ENCODE measurements at regions of chr17 and their contacts with region 1.

Region 1: DNA sequence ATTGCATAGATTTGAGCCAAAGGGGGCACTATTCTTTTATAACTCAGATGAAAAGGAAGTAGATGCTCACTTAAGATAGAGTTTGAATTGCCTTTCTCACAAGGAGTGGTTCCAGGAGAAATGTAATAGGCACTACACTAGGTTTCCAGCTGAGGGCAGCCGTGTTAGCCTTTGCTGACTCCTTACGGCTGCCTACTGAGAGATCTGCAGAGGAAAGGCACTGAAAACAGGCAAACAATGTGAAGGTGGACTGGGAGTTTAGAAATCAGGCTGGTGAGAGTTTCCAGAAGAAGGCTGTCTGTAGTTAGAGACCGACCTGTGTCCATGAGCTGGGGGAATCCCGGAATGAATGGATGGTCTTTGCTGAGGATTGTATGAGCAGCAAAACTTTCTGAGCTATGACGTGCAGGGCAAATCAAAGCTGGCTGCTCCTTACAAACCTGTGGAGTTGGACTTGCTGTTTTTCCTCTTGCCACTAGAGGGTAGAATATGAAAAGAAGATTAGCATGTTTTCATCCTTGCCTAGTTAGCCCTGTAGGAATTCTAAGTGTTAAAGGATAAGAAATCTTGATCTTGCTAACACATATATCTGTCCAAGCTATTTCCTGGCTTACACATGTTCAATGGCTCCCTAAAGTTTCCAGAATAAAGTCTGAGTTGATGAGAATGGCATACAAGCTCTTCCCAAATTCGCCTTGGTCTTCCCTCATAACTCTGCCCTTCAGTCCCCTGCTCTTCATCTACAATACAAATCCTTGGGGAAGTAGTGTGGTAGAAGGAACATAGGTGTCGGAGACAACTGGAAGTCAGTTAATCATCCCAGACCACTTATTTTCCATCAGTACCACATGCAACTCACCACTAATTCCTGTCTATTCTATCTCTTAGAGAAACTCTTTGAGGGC is 20.1 kb upstream of the TAOK1 start:
- DNase-seq: no peak
- H3K4me3 ChIP-seq: no peak overlapping the region
- H3K27me3 ChIP-seq: no peaks in the 10 kb centered on the region
- CTCF ChIP-seq: peak; percentile 57

Region 2: GRCh38 chr17:29357821-29358232 is 12.3 kb before region 1 on chr17:
- CTCF ChIA-PET with region 1: interaction called, 14 read pairs
- POLR2A ChIA-PET with region 1: no interaction called
- DNase-seq: no peak
- H3K4me3 ChIP-seq: no peak overlapping the region
- H3K27me3 ChIP-seq: no peaks in the 10 kb centered on the region
- CTCF ChIP-seq: no peak

Region 3: GRCh38 chr17:29533976-29534375 is 163.9 kb after region 1 on chr17:
- CTCF ChIA-PET with region 1: interaction called, 102 read pairs
- POLR2A ChIA-PET with region 1: no interaction called
- DNase-seq: no peak
- H3K4me3 ChIP-seq: no peak overlapping the region
- H3K27me3 ChIP-seq: no peaks in the 10 kb centered on the region
- CTCF ChIP-seq: no peak

Region 4: DNA sequence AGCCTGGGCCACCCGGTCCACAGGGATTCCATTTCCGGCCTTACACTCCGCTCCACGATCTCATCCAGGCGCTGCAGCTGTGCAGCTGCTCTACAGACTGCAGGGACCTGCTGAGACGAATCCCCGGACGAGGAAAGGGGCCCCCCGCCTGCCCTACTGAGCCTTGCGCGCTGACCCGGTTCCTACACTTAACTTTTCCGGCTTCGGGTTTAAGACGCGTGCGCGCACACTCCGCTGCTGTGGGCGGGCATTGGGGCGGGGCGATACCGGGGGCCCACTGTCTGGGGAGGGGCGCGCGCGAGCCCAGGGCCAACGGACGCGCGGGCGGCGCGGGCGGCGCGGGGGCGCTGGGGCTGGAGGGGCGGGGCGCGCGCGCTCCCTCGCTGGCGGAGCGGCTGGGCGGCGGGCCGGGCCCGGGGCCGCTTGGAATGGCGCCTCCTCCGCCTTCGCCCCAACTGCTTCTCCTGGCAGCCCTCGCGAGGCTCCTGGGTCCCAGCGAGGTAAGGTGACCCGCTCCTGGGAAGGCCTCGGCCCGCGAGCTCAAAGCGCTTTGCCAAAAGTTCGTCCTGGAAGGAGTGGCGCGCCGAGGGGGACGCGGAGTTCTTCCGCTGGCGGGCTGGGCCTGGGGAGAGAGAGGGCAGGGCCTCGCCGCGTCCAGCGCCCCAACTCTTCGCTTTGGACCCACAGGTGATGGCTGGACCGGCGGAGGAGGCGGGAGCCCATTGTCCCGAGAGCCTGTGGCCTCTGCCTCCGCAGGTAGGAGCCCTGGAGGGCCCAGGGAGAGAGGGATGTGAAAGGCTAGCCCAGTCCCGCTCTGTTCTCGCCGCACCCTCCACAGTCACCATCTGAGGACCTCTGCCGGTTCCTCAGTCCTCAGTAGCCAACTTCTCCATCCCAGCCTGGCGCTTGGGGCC is 198.5 kb after region 1 on chr17 and contains the start of gene TP53I13:
- CTCF ChIA-PET with region 1: interaction called, 59 read pairs
- POLR2A ChIA-PET with region 1: interaction called, 4 read pairs
- DNase-seq: no peak
- H3K4me3 ChIP-seq: peak within 1 kb of the TSS; percentile 79
- H3K27me3 ChIP-seq: no peaks in the 10 kb centered on the region
- CTCF ChIP-seq: 0 out of 2 replicates have a peak, but pooled peaks have one; percentile 5
- polyA plus RNA-seq, gene TP53I13: 26.8 and 38.7 TPM in 2 replicates